ENCODE measurements at regions of chrX and their contacts with region 1.

Region 1: DNA sequence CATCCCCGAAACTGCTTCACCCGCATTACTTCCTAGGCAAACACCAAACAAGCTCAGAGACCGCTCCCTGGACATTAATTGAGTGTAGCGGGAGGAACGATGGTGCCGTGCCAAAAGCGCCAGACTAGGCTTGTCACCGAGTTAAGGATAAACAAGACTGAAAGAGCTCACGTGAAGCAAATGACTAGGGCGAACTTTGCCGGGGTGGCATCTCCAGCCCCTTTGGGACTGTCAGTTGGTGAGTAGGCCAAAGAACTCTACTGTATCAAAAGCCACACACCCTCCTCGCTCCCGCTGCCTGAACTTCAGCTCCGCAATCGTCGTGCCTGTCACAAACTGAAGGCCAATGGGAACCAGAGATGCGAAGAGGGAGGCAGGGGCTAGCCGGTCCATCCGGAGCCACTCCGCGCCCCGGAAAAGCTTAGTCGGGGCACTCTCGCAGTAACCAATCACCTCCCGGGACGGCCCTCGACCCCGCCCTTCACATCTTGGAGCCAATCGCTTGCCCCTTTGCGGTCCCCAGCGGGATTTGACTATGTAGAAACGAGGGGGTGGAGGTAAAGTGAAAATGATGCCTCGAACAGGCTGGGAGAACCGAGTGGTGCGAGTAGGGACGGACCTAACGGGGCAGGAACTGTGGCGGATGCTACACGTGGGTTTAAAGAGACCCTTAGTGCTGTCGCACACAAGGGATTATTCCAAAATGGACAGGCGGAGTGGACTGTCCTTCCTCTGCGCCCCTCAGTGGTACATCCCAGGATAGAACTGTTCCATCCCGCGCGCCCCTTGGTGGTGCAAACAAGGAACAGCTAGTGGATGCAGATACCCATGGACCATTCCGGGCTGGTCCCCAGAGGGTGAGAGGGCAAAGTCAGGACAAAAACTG is 37.1 kb upstream of the FAM156A start:
- DNase-seq: peak; percentile 95
- H3K4me3 Mint-ChIP-seq: peak overlapping the region; percentile 94
- H3K27ac Mint-ChIP-seq: peak overlapping the region; percentile 98
- H3K4me1 Mint-ChIP-seq: peaks cover 18% of the 10 kb centered on the region
- H3K27me3 Mint-ChIP-seq: no peaks in the 10 kb centered on the region

Region 2: DNA sequence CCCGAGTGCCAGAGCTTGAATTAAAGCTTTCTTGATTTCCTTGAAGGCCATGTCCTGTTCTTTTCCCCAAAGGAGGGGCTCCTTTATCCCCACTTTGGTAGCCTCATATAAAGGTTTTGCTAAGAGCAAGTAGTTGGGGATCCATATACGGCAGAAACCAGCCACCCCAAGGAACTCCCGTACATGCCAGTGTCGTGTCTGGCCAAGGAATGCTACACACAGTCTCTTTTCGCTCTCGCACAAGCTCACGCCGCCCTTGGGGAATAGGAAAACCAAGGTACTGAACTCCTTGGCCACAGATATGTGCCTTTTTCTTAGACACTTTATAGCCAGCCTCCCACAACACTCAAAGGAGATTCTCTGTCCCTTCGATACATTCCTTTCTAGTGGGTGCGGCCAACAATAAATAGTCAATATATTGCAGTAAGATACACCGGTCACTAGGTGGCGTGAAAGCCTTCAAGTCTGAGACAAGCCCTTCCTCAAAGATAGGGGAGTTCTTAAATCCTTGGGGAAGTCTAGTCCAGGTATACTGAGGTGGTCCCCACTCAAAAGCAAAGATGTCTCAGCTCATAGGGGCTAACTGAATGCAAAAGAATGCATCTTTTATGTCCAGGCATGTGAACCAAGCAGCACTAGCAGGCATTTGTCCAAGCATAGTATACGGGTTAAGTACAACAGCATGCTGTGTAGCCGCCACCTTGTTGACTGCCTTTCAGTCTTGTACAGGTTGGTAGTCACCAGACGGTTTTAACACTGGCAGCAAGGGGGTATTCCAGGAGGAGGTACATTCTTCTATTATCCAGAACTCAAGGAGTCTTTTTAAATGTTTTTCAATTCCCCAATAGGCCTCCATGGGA is 420.7 kb before region 1 on chrX:
- CTCF ChIA-PET with region 1: interaction called, 3 read pairs
- POLR2A ChIA-PET with region 1: no interaction called
- intact Hi-C with region 1: loop called (anchors 1 kb)
- DNase-seq: peak; percentile 15
- H3K4me3 Mint-ChIP-seq: no peak overlapping the region
- H3K27ac Mint-ChIP-seq: no peak overlapping the region
- H3K4me1 Mint-ChIP-seq: no peaks in the 10 kb centered on the region
- H3K27me3 Mint-ChIP-seq: no peaks in the 10 kb centered on the region

Region 3: GRCh38 chrX:52979993-52980392 is 15.4 kb before region 1 on chrX:
- CTCF ChIA-PET with region 1: no interaction called
- POLR2A ChIA-PET with region 1: no interaction called
- intact Hi-C with region 1: no loop called
- DNase-seq: no peak
- H3K4me3 Mint-ChIP-seq: no peak overlapping the region
- H3K27ac Mint-ChIP-seq: no peak overlapping the region
- H3K4me1 Mint-ChIP-seq: no peaks in the 10 kb centered on the region
- H3K27me3 Mint-ChIP-seq: no peaks in the 10 kb centered on the region

Region 4: DNA sequence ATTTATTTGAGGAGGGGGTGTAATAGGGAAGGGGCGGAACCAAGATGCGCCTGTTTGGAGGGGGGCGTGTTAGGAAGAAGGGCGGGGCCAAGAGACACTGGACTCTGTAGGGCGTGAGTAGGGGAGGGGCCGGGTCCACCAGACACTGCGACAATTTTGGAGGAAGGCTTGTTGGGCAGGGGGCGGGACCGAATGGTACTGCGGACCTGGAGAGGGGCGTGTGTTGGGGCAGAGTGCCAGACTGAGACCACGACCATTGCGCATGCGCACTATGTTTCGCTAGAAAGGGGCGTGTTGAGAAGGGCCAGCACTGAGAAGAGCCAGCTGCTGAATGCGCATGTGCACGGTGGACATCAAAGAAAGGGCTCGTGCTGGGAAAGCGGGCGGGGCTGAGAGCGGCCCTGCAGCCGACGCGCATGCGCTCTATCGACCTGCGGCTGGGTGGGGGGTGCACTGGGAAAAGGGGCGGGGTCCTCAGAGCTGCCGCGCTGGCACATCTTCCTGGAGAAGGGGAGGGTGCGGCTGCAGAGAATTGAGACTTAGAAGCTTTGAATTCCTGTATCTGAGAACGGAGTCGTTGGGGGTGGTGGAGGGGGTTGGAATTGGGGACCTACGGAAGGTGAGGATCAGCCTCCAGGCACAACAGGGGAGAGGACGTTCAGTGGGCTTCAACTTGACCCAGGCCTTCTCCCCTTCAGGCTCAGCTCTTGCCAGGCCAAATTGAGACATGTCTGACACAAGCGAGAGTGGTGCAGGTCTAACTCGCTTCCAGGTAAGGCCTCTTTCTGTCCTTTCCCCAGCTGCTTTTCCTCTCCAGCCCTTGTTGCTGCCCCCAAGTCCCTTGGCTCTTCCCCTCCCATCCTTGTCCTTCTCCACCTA is 1813.5 kb after region 1 on chrX:
- CTCF ChIA-PET with region 1: no interaction called
- POLR2A ChIA-PET with region 1: no interaction called
- intact Hi-C with region 1: loop called (anchors 5 kb)
- DNase-seq: peak; percentile 94
- H3K4me3 Mint-ChIP-seq: peak overlapping the region; percentile 90
- H3K27ac Mint-ChIP-seq: peak overlapping the region; percentile 90
- H3K4me1 Mint-ChIP-seq: peaks cover 13% of the 10 kb centered on the region
- H3K27me3 Mint-ChIP-seq: peaks cover 2% of the 10 kb centered on the region

Measured in activated CD4-positive, alpha-beta memory T cell treated with anti-CD3 and anti-CD28 coated beads for 36 hours (primary cell).